Psoas muscle (tissue), 8 donors: ENCODE measurements at regions of chr1 and their contacts with region 1.

Region 1: GRCh38 chr1:20633190-20634064 is at the start of gene PINK1:
- DNase-seq: peak; percentile 79 to 89
- ATAC-seq: peak; percentile 83 to 90 (median 86)
- H3K4me3 ChIP-seq: peak within 1 kb of the TSS; percentile 88
- H3K27ac ChIP-seq: peak within 1 kb of the TSS; percentile 96
- H3K4me1 ChIP-seq: peaks cover 19% of the 10 kb centered on the region
- H3K27me3 ChIP-seq: no peaks in the 10 kb centered on the region
- CTCF ChIP-seq: peak; percentile 99
- total RNA-seq, gene PINK1: 219 to 416 (median 390) TPM

Region 2: GRCh38 chr1:20521960-20522861 is 111.2 kb before region 1 on chr1:
- intact Hi-C with region 1: loop called (anchors 5 kb)
- DNase-seq: peak; percentile 53 to 76
- ATAC-seq: peak; percentile 72 to 93 (median 80)
- H3K4me3 ChIP-seq: no peak overlapping the region
- H3K27ac ChIP-seq: no peak overlapping the region
- H3K4me1 ChIP-seq: peaks cover 3% of the 10 kb centered on the region
- H3K27me3 ChIP-seq: peaks cover 0 to 8% (median 0%) of the 10 kb centered on the region in 3 donors
- CTCF ChIP-seq: peak; percentile 86

Region 3: GRCh38 chr1:20574686-20575540 is 58.5 kb before region 1 on chr1:
- intact Hi-C with region 1: loop called (anchors 1 to 5 kb)
- DNase-seq: peak; percentile 88 to 91
- ATAC-seq: peak; percentile 45 to 90 (median 77)
- H3K4me3 ChIP-seq: no peak overlapping the region
- H3K27ac ChIP-seq: no peak overlapping the region
- H3K4me1 ChIP-seq: peaks cover 6% of the 10 kb centered on the region
- H3K27me3 ChIP-seq: no peaks in the 10 kb centered on the region
- CTCF ChIP-seq: peak; percentile 45

Region 4: GRCh38 chr1:20753589-20753988 is 120.2 kb after region 1 on chr1:
- intact Hi-C with region 1: no loop called
- DNase-seq: no peak
- ATAC-seq: no peak
- H3K4me3 ChIP-seq: no peak overlapping the region
- H3K27ac ChIP-seq: no peak overlapping the region
- H3K4me1 ChIP-seq: no peaks in the 10 kb centered on the region
- H3K27me3 ChIP-seq: no peaks in the 10 kb centered on the region
- CTCF ChIP-seq: no peak